Naive thymus-derived CD4-positive, alpha-beta T cell (primary cell): ENCODE measurements at regions of chr22 and their contacts with region 1.

Region 1: DNA sequence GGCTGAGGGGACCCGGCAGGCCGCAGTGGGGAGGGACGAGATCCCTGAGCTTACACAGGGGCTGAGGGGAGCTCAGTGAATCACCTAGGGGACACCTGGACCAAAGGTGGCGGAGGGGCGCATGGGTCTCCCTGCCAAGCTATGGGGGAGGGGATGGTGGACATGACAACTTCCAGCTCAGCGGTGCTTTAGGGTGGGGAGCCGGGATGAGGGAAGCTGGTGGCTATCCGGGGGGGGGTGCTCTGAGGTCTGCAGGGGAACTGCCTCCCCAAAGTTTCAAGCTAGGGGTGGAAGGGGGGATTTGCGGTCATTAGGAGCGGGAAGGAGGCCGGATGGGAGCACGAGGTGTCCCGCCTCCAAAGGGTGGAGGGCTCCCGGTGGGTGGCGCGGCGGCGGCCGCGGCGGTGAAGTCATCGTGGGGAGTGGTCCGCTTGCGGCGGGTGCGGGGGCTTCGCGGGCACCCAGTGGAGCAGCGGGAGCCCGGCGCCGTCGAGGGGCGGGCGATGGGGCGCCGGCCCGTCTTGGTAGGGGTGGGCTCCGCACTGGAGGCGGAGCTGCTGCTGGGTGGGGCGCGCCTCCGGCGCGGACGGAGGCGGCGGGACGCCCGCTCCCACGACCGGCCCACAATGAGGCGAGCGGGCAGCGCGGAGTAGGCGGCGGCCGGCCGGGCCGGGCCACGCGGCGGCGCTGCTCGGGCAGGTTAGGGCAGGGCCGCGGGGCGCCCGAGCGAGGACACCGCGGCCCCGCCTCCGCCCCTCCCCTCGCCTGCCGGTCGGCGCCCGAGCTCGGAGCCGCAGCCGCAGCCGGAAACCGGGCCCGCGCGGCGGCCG is at the start of gene MICALL1:
- DNase-seq: peak; percentile 39 to 82 (median 57)
- ATAC-seq: peak; percentile 90
- H3K4me3 ChIP-seq: peak within 1 kb of the TSS; percentile 47
- H3K4me3 Mint-ChIP-seq: peak within 1 kb of the TSS; percentile 69 to 92 (median 86)
- H3K27ac ChIP-seq: peak within 1 kb of the TSS; percentile 72
- H3K27ac Mint-ChIP-seq: peak within 1 kb of the TSS; percentile 79 to 90 (median 86)
- H3K4me1 ChIP-seq: peaks cover 0 to 9% of the 10 kb centered on the region in 2 donors
- H3K4me1 Mint-ChIP-seq: peaks cover 21 to 34% (median 26%) of the 10 kb centered on the region in 7 donors
- H3K27me3 ChIP-seq: no peaks in the 10 kb centered on the region
- H3K27me3 Mint-ChIP-seq: no peaks in the 10 kb centered on the region
- total RNA-seq, gene MICALL1: 22.2 to 40.0 (median 27.8) TPM

Region 2: DNA sequence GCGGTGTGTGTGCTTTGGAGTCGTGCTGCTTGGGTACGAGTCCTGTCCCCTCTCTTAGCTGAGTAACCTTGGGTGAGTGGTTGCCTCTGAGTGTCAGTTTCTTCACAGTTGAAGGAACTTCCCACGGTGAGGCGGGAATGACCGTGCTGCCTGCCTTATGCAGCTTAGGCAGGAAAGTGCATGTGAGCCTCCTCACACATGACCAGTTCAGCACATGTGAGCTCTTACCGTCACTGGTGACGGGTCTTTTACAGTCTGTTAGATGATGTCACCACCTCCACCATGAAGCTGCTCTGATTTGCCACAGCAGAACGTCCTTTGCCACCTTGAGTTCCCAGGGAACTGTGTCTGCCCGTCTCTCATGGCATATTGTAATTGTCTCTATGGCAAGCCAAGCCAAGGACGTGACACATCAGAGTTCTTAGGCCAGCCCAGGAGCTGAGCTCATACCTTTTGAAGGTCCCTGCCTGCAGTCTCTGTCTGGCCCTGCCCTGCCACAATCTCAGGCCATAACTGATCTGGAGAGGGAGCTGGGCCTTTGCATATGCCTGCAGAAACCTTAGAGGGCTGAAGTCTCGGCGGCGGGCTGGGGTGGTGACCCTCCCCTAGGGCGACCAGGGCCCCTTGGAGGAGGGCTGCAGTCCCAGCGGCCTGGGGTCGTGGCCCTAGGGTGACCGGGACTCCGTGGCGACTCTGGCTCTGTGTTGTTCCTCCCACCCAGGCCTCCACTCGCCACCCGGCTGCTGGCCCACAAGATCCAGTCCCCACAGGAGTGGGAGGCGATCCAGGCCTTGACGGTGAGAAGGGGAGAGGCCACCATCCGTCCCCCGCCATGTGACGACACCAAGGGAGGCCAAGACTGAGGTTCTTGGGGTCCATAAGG is 289.3 kb before region 1 on chr22:
- CTCF ChIA-PET with region 1: no interaction called
- POLR2A ChIA-PET with region 1: no interaction called
- intact Hi-C with region 1: no loop called
- DNase-seq: no peak
- ATAC-seq: no peak
- H3K4me3 ChIP-seq: no peak overlapping the region
- H3K4me3 Mint-ChIP-seq: no peak overlapping the region
- H3K27ac ChIP-seq: no peak overlapping the region
- H3K27ac Mint-ChIP-seq: peak overlapping the region in 1 of 9 donors; percentile 41
- H3K4me1 ChIP-seq: no peaks in the 10 kb centered on the region
- H3K4me1 Mint-ChIP-seq: peaks cover 0 to 9% (median under 1%) of the 10 kb centered on the region in 7 donors
- H3K27me3 ChIP-seq: no peaks in the 10 kb centered on the region
- H3K27me3 Mint-ChIP-seq: no peaks in the 10 kb centered on the region

Region 3: DNA sequence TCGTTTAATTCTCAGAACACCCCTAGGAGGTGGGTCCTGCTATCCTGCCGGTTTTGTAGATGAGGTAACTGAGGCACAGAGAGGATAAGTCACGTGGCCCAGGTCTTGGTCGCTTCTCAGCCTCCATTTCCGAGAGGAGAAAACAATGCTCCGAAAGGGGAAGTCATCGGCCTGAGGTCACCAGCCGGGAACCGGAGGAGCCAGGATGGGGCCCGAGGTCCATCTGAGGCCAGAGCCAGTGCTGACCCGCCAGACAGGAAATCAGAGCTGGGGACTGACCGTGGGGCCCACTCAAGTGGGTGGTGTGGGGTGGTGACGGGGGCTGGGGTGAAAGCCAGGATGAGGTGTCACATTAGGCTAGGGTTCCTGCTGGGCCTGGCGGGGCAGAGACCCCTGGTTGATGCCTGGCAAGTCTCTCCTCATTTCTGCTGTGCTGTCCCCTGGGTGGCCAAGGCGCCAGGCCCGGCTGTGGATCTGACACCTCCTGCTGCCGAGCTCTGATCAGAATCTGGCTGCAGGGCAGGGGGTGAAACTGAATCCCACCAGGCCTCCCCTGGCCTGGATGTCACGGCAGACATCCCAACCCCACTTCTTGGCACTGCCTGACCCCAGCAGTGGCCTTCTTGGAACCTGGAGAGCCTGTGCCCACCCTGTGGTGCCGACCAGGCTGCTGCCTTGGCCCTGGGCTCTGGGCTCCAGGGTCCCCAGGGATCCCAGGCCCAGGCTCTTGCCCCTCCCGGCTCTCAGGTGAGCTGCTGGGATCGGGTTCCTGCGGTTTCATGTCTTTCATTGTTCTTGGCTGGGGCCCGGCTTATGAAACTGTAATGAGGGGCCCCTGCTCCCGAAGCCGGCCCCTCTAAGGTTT is 196.9 kb before region 1 on chr22:
- CTCF ChIA-PET with region 1: no interaction called
- POLR2A ChIA-PET with region 1: no interaction called
- intact Hi-C with region 1: no loop called
- DNase-seq: no peak
- ATAC-seq: peak; percentile 47
- H3K4me3 ChIP-seq: no peak overlapping the region
- H3K4me3 Mint-ChIP-seq: no peak overlapping the region
- H3K27ac ChIP-seq: no peak overlapping the region
- H3K27ac Mint-ChIP-seq: no peak overlapping the region
- H3K4me1 ChIP-seq: no peaks in the 10 kb centered on the region
- H3K4me1 Mint-ChIP-seq: no peaks in the 10 kb centered on the region
- H3K27me3 ChIP-seq: no peaks in the 10 kb centered on the region
- H3K27me3 Mint-ChIP-seq: no peaks in the 10 kb centered on the region

Region 4: GRCh38 chr22:37764622-37765021 is 141.1 kb before region 1 on chr22:
- CTCF ChIA-PET with region 1: no interaction called
- POLR2A ChIA-PET with region 1: no interaction called
- intact Hi-C with region 1: no loop called
- DNase-seq: no peak
- ATAC-seq: no peak
- H3K4me3 ChIP-seq: no peak overlapping the region
- H3K4me3 Mint-ChIP-seq: no peak overlapping the region
- H3K27ac ChIP-seq: no peak overlapping the region
- H3K27ac Mint-ChIP-seq: no peak overlapping the region
- H3K4me1 ChIP-seq: no peaks in the 10 kb centered on the region
- H3K4me1 Mint-ChIP-seq: peaks cover 0 to 9% (median 0%) of the 10 kb centered on the region in 7 donors
- H3K27me3 ChIP-seq: no peaks in the 10 kb centered on the region
- H3K27me3 Mint-ChIP-seq: no peaks in the 10 kb centered on the region

Region 5: DNA sequence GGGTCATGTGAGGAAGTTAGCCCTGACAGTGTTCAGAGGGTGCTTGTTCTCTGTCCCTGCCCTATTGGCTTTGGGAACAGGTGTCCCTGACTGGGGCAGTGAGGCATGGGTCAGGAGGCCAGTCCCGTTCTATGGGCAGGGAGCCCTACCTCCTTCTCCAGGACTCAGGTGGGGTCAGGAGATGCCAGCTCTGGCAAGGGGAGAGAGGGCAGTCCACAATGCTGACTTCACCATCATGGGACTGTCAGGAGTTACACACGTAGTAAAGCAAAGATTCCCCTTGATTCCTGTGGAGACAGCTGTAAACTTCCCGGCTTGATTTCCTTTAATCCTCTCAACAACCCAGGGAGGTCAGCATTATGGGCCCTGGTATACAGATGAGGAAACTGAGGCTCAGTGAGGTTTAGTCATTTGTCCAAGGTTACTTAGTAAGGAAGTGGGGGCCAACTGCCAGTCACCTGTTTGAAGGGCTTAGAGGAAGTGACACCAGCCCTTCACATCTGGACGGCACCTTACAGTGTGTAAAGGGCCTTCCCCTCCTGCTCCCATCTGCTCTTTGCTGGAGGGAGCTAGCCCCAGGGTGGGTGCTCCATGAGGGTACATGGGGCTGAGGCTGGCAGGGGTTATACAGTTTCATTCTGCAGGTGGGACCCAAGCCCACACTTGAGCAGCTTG is 12.3 kb after region 1 on chr22:
- CTCF ChIA-PET with region 1: no interaction called
- POLR2A ChIA-PET with region 1: interaction called, 4 read pairs
- intact Hi-C with region 1: loop called in 1 of 2 experiments (anchors 1 kb)
- DNase-seq: no peak
- ATAC-seq: no peak
- H3K4me3 ChIP-seq: no peak overlapping the region
- H3K4me3 Mint-ChIP-seq: no peak overlapping the region
- H3K27ac ChIP-seq: no peak overlapping the region
- H3K27ac Mint-ChIP-seq: peak overlapping the region in 2 of 9 donors; percentile 23 to 31
- H3K4me1 ChIP-seq: no peaks in the 10 kb centered on the region
- H3K4me1 Mint-ChIP-seq: peaks cover 0 to 7% (median 6%) of the 10 kb centered on the region in 7 donors
- H3K27me3 ChIP-seq: no peaks in the 10 kb centered on the region
- H3K27me3 Mint-ChIP-seq: no peaks in the 10 kb centered on the region

Region 6: DNA sequence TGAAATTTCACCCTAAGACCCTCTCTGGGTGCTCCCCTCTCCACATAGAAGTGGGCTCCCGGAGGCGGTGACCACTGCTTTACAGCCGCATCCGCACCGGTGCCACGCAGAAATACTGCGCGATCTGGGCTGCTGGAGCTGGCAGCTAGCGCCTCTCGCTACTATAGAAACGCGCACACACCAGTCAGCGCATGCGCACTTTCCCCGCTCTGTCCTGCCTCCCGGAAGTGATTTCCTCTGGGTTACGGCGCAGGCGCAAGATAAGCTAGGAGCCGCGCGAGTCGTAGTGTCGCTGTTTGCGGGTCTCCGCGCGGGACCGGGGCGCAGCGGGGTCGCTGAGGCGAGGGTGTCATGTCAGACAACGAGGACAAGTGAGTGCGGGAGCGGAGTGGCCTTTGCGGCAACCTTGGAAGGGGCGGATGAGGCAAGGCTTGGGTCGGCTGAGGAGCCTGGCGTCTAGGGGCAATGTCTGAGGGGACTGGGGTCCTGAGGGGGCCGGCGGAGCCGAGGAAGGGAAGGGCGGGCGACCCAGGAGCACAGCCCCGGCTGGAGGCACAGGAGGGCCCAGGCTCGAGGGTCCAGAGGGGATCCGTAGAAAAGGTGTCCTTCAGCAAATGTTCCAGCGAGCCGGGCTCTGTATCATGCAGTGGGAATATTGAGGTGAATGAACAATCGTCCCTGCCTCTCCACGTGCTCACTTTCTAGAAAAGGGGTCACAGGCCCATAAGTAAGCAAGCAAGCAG is 47.9 kb after region 1 on chr22 and contains the starts of genes C22orf23 and POLR2F:
- CTCF ChIA-PET with region 1: interaction called, 3 read pairs
- POLR2A ChIA-PET with region 1: no interaction called
- intact Hi-C with region 1: loop called (anchors 1 kb)
- DNase-seq: peak; percentile 92 to 96 (median 94)
- ATAC-seq: peak; percentile 97
- H3K4me3 ChIP-seq: peak within 1 kb of the TSS; percentile 96
- H3K4me3 Mint-ChIP-seq: peak within 1 kb of the TSS; percentile 93 to 100 (median 99)
- H3K27ac ChIP-seq: peak within 1 kb of the TSS; percentile 75
- H3K27ac Mint-ChIP-seq: peak within 1 kb of the TSS; percentile 93 to 99 (median 95)
- H3K4me1 ChIP-seq: peaks cover 13 to 18% of the 10 kb centered on the region in 2 donors
- H3K4me1 Mint-ChIP-seq: peaks cover 27 to 54% (median 51%) of the 10 kb centered on the region in 7 donors
- H3K27me3 ChIP-seq: no peaks in the 10 kb centered on the region
- H3K27me3 Mint-ChIP-seq: peaks cover 4 to 20% (median 14%) of the 10 kb centered on the region in 5 donors
- total RNA-seq, gene C22orf23: 0.31 TPM in 1 of 5 experiments, not detected in the others
- total RNA-seq, gene POLR2F: 25.9 to 67.8 (median 43.9) TPM